ENCODE measurements at regions of chr18 and their contacts with region 1.

Region 1: GRCh38 chr18:9814431-9814830 is 71.3 kb upstream of the TXNDC2 start:
- DNase-seq: no peak
- H3K4me3 ChIP-seq: no peak overlapping the region
- H3K27ac ChIP-seq: no peak overlapping the region
- H3K4me1 ChIP-seq: peaks cover under 1 to 16% (median 1%) of the 10 kb centered on the region in 3 donors
- H3K27me3 ChIP-seq: no peaks in the 10 kb centered on the region
- CTCF ChIP-seq: no peak
- POLR2A ChIP-seq: no peak

Region 2: GRCh38 chr18:9943311-9943710 is 128.9 kb after region 1 on chr18:
- intact Hi-C with region 1: loop called (anchors 10 kb)
- DNase-seq: no peak
- H3K4me3 ChIP-seq: no peak overlapping the region
- H3K27ac ChIP-seq: no peak overlapping the region
- H3K4me1 ChIP-seq: no peaks in the 10 kb centered on the region
- H3K27me3 ChIP-seq: no peaks in the 10 kb centered on the region
- CTCF ChIP-seq: no peak
- POLR2A ChIP-seq: no peak

Measured in esophagus squamous epithelium (tissue), 5 donors.